ENCODE measurements at regions of chr18 and their contacts with region 1.

Region 1: DNA sequence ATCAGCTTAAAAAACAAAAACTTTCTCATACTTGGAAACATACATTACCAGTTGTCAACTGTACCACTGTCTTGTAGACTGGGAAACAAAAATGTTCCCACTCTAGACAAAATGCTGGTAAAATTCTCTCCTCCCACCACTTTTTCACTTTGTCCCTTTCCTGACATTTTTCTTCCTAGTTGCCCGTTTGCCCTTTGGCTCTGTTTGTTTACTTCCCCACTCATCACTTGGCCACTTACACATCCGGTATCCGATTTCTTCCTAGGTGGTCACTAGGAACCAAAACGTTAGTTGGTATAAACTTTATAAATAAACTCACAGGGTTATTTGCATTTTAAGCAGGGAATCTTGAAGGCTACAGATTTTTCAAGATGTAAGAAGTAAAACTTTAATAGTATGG is 84.9 kb downstream of the METTL4 start:
- DNase-seq: no peak
- H3K4me3 ChIP-seq: no peak overlapping the region
- H3K27ac ChIP-seq: no peak overlapping the region
- H3K4me1 ChIP-seq: no peaks in the 10 kb centered on the region
- H3K27me3 ChIP-seq: peaks cover 13% of the 10 kb centered on the region
- CTCF ChIP-seq: no peak

Region 2: GRCh38 chr18:2240311-2240705 is 246.1 kb before region 1 on chr18:
- CTCF ChIA-PET with region 1: no interaction called
- POLR2A ChIA-PET with region 1: no interaction called
- intact Hi-C with region 1: no loop called
- DNase-seq: no peak
- H3K4me3 ChIP-seq: no peak overlapping the region
- H3K27ac ChIP-seq: no peak overlapping the region
- H3K4me1 ChIP-seq: no peaks in the 10 kb centered on the region
- H3K27me3 ChIP-seq: peaks cover 51% of the 10 kb centered on the region
- CTCF ChIP-seq: no peak

Region 3: DNA sequence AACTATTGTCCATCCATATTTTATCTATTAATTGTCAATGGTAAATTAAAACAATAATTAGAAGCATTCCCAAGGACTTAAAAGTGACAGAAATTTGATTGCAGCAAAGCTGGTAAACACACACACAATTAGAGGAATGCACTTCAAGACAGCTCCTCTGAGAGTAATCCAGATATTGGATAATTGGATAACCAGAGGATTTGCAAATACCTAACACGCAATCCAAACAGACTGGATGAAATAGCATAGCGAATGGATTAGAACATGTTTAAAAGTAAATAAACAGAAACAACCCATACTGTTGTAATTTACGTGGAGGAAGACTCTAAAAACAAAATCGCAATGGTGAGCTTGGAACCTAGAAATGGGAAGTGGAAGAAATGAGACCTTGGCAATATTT is 154.9 kb before region 1 on chr18:
- CTCF ChIA-PET with region 1: no interaction called
- POLR2A ChIA-PET with region 1: no interaction called
- intact Hi-C with region 1: loop called (anchors 5 kb)
- DNase-seq: no peak
- H3K4me3 ChIP-seq: no peak overlapping the region
- H3K27ac ChIP-seq: no peak overlapping the region
- H3K4me1 ChIP-seq: no peaks in the 10 kb centered on the region
- H3K27me3 ChIP-seq: peaks cover 46% of the 10 kb centered on the region
- CTCF ChIP-seq: no peak

Measured in A673 (cell line).